Colonic mucosa (tissue), 4 donors: ENCODE measurements at regions of chr5 and their contacts with region 1.

Region 1: GRCh38 chr5:127875235-127876021 is 172.2 kb downstream of the CCDC192 start:
- DNase-seq: peak; percentile 81
- H3K4me3 ChIP-seq: no peak overlapping the region
- H3K27ac ChIP-seq: peak overlapping the region; percentile 19
- H3K4me1 ChIP-seq: peaks cover 3% of the 10 kb centered on the region
- H3K27me3 ChIP-seq: no peaks in the 10 kb centered on the region
- CTCF ChIP-seq: peak; percentile 33

Region 2: DNA sequence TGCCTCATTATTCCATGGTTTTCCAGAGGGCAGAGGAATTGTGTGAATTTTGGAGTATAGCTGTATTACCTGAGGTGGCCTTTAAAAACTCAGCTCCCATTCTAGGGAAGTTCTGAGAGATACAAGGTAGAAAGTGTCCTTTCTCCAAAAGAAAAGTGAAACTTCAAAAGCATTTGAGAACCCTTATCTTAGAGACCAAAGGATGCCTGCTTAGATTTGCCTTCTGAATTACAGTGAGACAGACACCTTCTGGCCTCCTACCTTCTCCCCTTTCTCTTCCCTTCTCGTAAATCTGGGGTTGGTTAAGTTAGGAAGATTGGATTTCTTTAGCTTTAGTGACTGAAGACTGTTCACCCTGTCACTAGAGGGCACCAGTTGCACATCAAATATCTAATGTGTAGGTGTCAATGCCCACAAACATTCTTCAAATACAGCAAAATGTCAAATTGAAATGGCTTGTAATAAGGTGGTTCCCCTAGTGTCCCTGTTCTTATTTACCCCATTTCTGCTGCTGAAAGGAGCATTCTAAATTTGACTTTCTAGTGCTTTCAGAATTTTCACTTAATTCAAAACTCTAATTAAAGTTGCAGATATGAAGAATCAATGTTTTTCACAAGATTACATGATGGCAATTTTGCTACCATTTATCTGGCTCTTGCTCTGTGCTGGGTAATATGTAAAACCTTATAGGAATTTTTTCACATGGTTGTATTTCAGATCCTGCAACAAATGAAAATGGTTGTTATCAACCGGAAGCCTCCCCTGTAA is 311.2 kb before region 1 on chr5:
- intact Hi-C with region 1: loop called (anchors 10 kb)
- DNase-seq: peak; percentile 62
- H3K4me3 ChIP-seq: no peak overlapping the region
- H3K27ac ChIP-seq: no peak overlapping the region
- H3K4me1 ChIP-seq: no peaks in the 10 kb centered on the region
- H3K27me3 ChIP-seq: no peaks in the 10 kb centered on the region
- CTCF ChIP-seq: peak; percentile 55

Region 3: DNA sequence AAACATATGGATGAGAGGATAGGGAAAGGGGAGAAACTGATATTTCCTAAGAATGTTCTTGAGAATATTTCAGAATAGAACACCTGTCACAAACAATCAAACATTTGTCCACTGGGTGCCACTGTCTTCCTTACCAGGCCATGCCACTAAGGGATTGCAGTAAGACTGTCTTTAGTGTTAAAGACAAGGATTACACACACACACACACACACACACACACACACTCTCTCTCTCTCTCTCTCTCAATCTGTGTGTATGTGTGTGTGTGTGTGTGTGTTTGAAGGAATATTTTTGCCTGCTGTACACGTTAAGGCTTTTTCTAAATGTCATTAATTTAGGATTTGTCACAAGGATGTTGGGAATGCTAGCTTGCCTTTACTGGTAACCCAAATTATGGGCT is 117.9 kb before region 1 on chr5:
- intact Hi-C with region 1: loop called (anchors 10 kb)
- DNase-seq: peak; percentile 69
- H3K4me3 ChIP-seq: no peak overlapping the region
- H3K27ac ChIP-seq: peak overlapping the region; percentile 55
- H3K4me1 ChIP-seq: no peaks in the 10 kb centered on the region
- H3K27me3 ChIP-seq: no peaks in the 10 kb centered on the region
- CTCF ChIP-seq: peak; percentile 44

Region 4: DNA sequence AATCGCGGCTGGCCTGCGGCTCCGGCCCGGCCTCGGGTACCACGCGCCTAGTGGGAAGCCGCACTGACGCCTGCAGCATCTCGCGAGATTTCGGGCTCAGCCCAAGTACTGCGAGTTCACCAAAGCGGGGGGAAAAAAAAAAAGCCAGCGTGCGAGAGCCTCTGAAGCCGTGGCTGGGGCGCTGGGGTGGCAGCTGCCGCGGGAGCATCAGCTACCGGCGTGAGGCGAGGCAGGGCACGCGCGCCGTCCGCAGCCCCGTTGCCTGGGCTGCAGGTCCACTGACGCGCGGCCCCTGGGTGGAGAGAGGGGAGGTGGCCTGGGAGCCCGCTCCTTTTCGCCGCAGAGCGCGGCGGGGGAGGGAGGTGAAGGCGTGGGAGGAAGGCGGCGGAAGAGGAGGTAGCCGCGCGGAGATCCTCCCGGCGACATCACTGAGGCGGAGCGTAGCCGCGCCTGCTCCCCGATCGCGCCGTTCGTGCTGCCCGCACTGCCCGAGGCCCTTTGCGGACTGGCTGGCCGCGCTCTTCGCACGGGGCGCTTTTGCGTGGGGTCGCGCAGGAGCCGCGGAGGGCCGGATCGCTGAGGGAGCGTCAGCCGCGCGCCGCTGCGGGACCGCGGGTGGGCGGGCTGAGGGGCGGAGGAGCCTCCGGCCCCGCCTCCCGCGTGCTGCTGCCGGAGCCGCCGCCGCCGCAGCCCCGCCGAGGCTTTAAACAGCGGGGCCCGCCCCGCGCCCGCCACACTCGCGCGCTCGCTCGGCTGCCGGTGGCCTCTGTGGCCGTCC is 207.8 kb after region 1 on chr5 and contains the start of gene SLC12A2:
- intact Hi-C with region 1: loop called (anchors 10 kb)
- DNase-seq: peak; percentile 92
- H3K4me3 ChIP-seq: peak within 1 kb of the TSS; percentile 81
- H3K27ac ChIP-seq: peak within 1 kb of the TSS; percentile 98
- H3K4me1 ChIP-seq: peaks cover 3% of the 10 kb centered on the region
- H3K27me3 ChIP-seq: no peaks in the 10 kb centered on the region
- CTCF ChIP-seq: no peak
- total RNA-seq, gene SLC12A2: 159 to 189 TPM